CD14-positive monocyte (primary cell): ENCODE measurements at regions of chr20 and their contacts with region 1.

Region 1: DNA sequence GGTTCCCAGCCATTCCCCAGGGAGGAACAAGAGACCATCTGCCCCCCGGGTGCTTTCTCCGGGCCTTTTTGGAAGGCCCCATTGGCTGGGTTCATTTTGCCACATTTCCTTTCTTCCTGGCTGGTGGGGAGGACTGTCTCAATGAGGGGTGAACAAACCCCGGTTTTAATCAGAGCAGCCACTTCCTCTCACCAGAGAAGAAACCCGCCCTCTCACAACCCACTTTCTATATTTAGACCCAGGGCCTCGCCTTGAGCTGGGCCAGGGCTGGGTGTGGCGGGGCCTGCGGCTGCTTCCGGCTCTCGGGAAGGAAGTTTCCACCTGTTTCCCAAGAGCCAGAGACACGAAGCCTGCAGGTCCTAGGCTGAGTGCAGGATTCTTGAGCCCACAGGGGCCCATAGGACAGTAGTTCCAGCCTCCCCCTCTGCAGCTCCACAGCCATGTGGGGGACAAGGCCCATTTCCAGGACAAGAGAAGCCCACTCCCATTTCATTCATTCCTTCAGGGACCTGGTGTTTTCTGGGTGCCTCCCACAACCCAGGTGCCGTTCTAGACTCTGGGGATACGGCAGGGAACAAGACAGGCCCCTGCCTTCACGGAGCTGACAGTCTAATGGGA is 41.8 kb downstream of the RBM38 start:
- DNase-seq: peak; percentile 85 to 95 (median 92)
- H3K4me3 ChIP-seq: peak overlapping the region in 1 of 3 experiments; percentile 54
- H3K4me3 Mint-ChIP-seq: peak overlapping the region; percentile 16 to 76
- H3K27ac ChIP-seq: peak overlapping the region; percentile 87 to 94
- H3K27ac Mint-ChIP-seq: peak overlapping the region; percentile 95 to 99 (median 97)
- H3K4me1 ChIP-seq: peaks cover 85 to 94% of the 10 kb centered on the region in 2 donors
- H3K4me1 Mint-ChIP-seq: peaks cover 86% of the 10 kb centered on the region
- H3K27me3 ChIP-seq: no peaks in the 10 kb centered on the region
- H3K27me3 Mint-ChIP-seq: peaks cover 0 to 5% (median 2%) of the 10 kb centered on the region in 3 donors
- CTCF ChIP-seq: no peak

Region 2: GRCh38 chr20:57391074-57391554 is 41.9 kb before region 1 on chr20 and contains the start of gene RBM38:
- intact Hi-C with region 1: loop called (anchors 2 to 5 kb)
- DNase-seq: peak; percentile 37 to 62 (median 62)
- H3K4me3 ChIP-seq: peak within 1 kb of the TSS; percentile 67 to 84 (median 68)
- H3K4me3 Mint-ChIP-seq: peak within 1 kb of the TSS; percentile 90 to 93
- H3K27ac ChIP-seq: peak within 1 kb of the TSS; percentile 51 to 67
- H3K27ac Mint-ChIP-seq: peak within 1 kb of the TSS; percentile 34 to 92 (median 75)
- H3K4me1 ChIP-seq: peaks cover 45 to 55% of the 10 kb centered on the region in 2 donors
- H3K4me1 Mint-ChIP-seq: peaks cover 55% of the 10 kb centered on the region
- H3K27me3 ChIP-seq: no peaks in the 10 kb centered on the region
- H3K27me3 Mint-ChIP-seq: peaks cover 2 to 12% (median 3%) of the 10 kb centered on the region in 3 donors
- CTCF ChIP-seq: no peak
- polyA plus RNA-seq, gene RBM38: 7.5 to 48.3 (median 17.8) TPM

Region 3: DNA sequence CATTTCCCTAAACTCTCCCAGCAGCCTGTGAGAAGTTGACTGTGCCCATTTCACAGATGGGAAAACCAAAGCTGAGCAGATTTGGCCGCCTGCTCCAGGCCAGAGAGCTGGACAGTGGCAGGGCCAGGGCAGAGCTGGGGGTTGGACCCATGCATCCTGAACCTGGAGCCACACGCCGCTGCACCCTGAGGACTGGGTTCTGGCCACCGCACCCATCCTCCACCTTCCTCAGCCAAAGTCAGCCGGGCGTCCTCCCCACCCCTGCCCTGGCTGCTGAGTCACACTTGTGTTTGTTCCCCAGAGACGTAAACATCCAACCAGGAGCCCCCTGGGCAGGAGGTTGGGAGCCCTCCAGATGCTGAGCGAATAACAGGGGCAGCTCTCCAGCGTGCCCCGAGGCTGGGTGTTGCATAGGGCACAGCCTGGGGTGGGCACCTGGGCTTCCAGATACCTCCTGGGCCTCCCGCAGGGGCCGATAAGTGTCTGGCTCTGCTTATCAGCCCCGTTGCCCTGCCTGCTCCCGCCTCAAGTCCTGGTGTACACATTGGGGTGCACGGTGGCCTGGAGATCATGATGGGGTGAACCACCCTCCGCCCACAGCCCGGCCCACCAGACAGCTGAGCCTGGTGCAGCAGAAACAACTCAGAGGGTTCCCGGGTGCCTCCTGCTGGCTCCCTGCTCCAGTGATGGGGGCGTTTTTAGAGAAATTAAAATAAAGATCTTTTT is 18.0 kb before region 1 on chr20:
- intact Hi-C with region 1: no loop called
- DNase-seq: peak in 1 of 3 donors; percentile 23
- H3K4me3 ChIP-seq: no peak overlapping the region
- H3K4me3 Mint-ChIP-seq: no peak overlapping the region
- H3K27ac ChIP-seq: no peak overlapping the region
- H3K27ac Mint-ChIP-seq: peak overlapping the region in 2 of 7 donors; percentile 40
- H3K4me1 ChIP-seq: peaks cover 21 to 27% of the 10 kb centered on the region in 2 donors
- H3K4me1 Mint-ChIP-seq: peaks cover 33% of the 10 kb centered on the region
- H3K27me3 ChIP-seq: no peaks in the 10 kb centered on the region
- H3K27me3 Mint-ChIP-seq: peaks cover 0 to 5% (median 1%) of the 10 kb centered on the region in 3 donors
- CTCF ChIP-seq: no peak

Region 4: GRCh38 chr20:57450419-57450818 is 17.4 kb after region 1 on chr20:
- intact Hi-C with region 1: loop called in 1 of 2 experiments (anchors 2 kb)
- DNase-seq: peak; percentile 86 to 92 (median 92)
- H3K4me3 ChIP-seq: peak overlapping the region in 1 of 3 experiments; percentile 49
- H3K4me3 Mint-ChIP-seq: peak overlapping the region; percentile 72 to 85
- H3K27ac ChIP-seq: peak overlapping the region; percentile 77 to 84
- H3K27ac Mint-ChIP-seq: peak overlapping the region; percentile 94 to 99 (median 98)
- H3K4me1 ChIP-seq: peaks cover 49 to 63% of the 10 kb centered on the region in 2 donors
- H3K4me1 Mint-ChIP-seq: peaks cover 67% of the 10 kb centered on the region
- H3K27me3 ChIP-seq: no peaks in the 10 kb centered on the region
- H3K27me3 Mint-ChIP-seq: peaks cover 0 to 5% (median 4%) of the 10 kb centered on the region in 3 donors
- CTCF ChIP-seq: no peak

Region 5: GRCh38 chr20:57473246-57474048 is 40.5 kb after region 1 on chr20:
- intact Hi-C with region 1: loop called in 1 of 2 experiments (anchors 5 kb)
- DNase-seq: peak; percentile 71 to 85 (median 85)
- H3K4me3 ChIP-seq: peak overlapping the region in 1 of 3 experiments; percentile 66
- H3K4me3 Mint-ChIP-seq: peak overlapping the region; percentile 50 to 78
- H3K27ac ChIP-seq: peak overlapping the region; percentile 58 to 77
- H3K27ac Mint-ChIP-seq: peak overlapping the region; percentile 83 to 93 (median 91)
- H3K4me1 ChIP-seq: peaks cover 69 to 72% of the 10 kb centered on the region in 2 donors
- H3K4me1 Mint-ChIP-seq: peaks cover 63% of the 10 kb centered on the region
- H3K27me3 ChIP-seq: no peaks in the 10 kb centered on the region
- H3K27me3 Mint-ChIP-seq: peaks cover 7 to 20% (median 12%) of the 10 kb centered on the region in 3 donors
- CTCF ChIP-seq: peak; percentile 39

Region 6: GRCh38 chr20:57628047-57628961 is 195.3 kb after region 1 on chr20:
- intact Hi-C with region 1: loop called in 1 of 2 experiments (anchors 5 kb)
- DNase-seq: peak; percentile 80 to 90 (median 84)
- H3K4me3 ChIP-seq: peak overlapping the region in 1 of 3 experiments; percentile 50
- H3K4me3 Mint-ChIP-seq: peak overlapping the region; percentile 39 to 82
- H3K27ac ChIP-seq: peak overlapping the region; percentile 78 to 87
- H3K27ac Mint-ChIP-seq: peak overlapping the region; percentile 94 to 98 (median 96)
- H3K4me1 ChIP-seq: peaks cover 40 to 46% of the 10 kb centered on the region in 2 donors
- H3K4me1 Mint-ChIP-seq: peaks cover 39% of the 10 kb centered on the region
- H3K27me3 ChIP-seq: peaks cover 2 to 4% of the 10 kb centered on the region in 2 donors
- H3K27me3 Mint-ChIP-seq: peaks cover 0 to 6% (median 6%) of the 10 kb centered on the region in 3 donors
- CTCF ChIP-seq: no peak